MCF 10A (cell line): ENCODE measurements at regions of chr3 and their contacts with region 1.

Region 1: GRCh38 chr3:98602078-98602678 is 8.8 kb upstream of the CPOX start:
- DNase-seq: peak; percentile 70
- H3K4me3 Mint-ChIP-seq: no peak overlapping the region
- H3K27ac Mint-ChIP-seq: no peak overlapping the region
- H3K4me1 Mint-ChIP-seq: no peaks in the 10 kb centered on the region
- H3K27me3 Mint-ChIP-seq: no peaks in the 10 kb centered on the region
- CTCF ChIP-seq: peak; percentile 77

Region 2: DNA sequence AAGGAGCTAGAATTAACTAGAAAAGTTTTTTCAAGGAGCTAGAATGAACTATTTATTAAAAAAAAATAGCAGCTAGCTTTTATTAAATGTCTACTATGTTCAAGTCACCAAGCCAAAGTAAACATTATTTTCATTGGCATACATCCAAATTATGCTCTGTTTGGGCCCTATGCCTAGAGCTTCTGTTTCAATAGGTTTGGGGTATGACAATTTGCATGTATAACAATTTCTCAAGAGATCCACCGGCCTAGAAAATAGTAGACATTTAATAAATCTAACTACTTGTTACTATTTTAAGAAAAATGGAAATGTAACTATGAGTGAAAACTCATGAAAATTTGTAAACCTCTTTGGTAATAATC is 575.1 kb before region 1 on chr3:
- CTCF ChIA-PET with region 1: no interaction called
- POLR2A ChIA-PET with region 1: no interaction called
- intact Hi-C with region 1: no loop called
- DNase-seq: peak; percentile 56
- H3K4me3 Mint-ChIP-seq: no peak overlapping the region
- H3K27ac Mint-ChIP-seq: no peak overlapping the region
- H3K4me1 Mint-ChIP-seq: peaks cover 11% of the 10 kb centered on the region
- H3K27me3 Mint-ChIP-seq: no peaks in the 10 kb centered on the region
- CTCF ChIP-seq: no peak

Region 3: GRCh38 chr3:98588065-98588464 is 14.1 kb before region 1 on chr3:
- CTCF ChIA-PET with region 1: interaction called, 24 read pairs
- POLR2A ChIA-PET with region 1: interaction called, 8 read pairs
- intact Hi-C with region 1: no loop called
- DNase-seq: no peak
- H3K4me3 Mint-ChIP-seq: no peak overlapping the region
- H3K27ac Mint-ChIP-seq: no peak overlapping the region
- H3K4me1 Mint-ChIP-seq: peaks cover 33% of the 10 kb centered on the region
- H3K27me3 Mint-ChIP-seq: no peaks in the 10 kb centered on the region
- CTCF ChIP-seq: peak; percentile 30

Region 4: GRCh38 chr3:98670020-98670419 is 67.8 kb after region 1 on chr3:
- CTCF ChIA-PET with region 1: interaction called, 10 read pairs
- POLR2A ChIA-PET with region 1: no interaction called
- intact Hi-C with region 1: no loop called
- DNase-seq: no peak
- H3K4me3 Mint-ChIP-seq: no peak overlapping the region
- H3K27ac Mint-ChIP-seq: no peak overlapping the region
- H3K4me1 Mint-ChIP-seq: no peaks in the 10 kb centered on the region
- H3K27me3 Mint-ChIP-seq: no peaks in the 10 kb centered on the region
- CTCF ChIP-seq: no peak

Region 5: GRCh38 chr3:98784666-98785600 is 182.8 kb after region 1 on chr3:
- CTCF ChIA-PET with region 1: interaction called, 30 read pairs
- POLR2A ChIA-PET with region 1: no interaction called
- intact Hi-C with region 1: no loop called
- DNase-seq: peak; percentile 81
- H3K4me3 Mint-ChIP-seq: peak overlapping the region; percentile 1
- H3K27ac Mint-ChIP-seq: peak overlapping the region; percentile 38
- H3K4me1 Mint-ChIP-seq: peaks cover 42% of the 10 kb centered on the region
- H3K27me3 Mint-ChIP-seq: no peaks in the 10 kb centered on the region
- CTCF ChIP-seq: no peak

Region 6: GRCh38 chr3:98806541-98806941 is 204.4 kb after region 1 on chr3:
- CTCF ChIA-PET with region 1: interaction called, 407 read pairs
- POLR2A ChIA-PET with region 1: no interaction called
- intact Hi-C with region 1: no loop called
- DNase-seq: no peak
- H3K4me3 Mint-ChIP-seq: no peak overlapping the region
- H3K27ac Mint-ChIP-seq: peak overlapping the region; percentile 43
- H3K4me1 Mint-ChIP-seq: no peaks in the 10 kb centered on the region
- H3K27me3 Mint-ChIP-seq: no peaks in the 10 kb centered on the region
- CTCF ChIP-seq: no peak

Region 7: DNA sequence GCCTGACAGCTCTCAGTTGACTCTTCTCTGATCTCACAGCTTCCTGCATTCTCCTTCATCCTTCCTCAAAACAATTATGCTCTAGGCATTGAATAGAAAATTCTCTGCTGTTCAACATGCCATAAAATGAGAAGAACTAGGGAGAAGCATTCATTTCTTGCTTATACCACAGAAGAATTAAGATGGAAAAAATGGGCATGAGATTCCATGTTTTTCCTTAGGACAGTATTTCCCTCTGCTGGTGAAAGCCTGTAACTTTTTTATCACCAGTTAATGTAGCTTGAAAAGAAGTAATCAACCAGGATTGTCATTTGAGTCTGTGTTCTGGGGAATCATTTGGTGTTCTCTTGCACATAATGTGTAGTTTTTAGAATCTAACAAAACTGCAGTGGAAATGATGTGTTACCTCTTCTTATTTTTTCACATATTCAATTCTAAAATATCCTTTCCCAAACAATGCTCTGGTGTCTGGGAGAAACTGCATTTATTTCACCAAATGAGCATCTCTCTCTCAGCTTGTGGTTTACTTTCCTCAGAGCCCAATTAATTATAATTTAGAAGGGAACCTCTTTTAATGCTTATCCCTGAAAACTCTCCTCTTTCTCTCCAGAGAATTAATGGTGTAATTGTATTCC is 392.1 kb after region 1 on chr3:
- CTCF ChIA-PET with region 1: interaction called, 51 read pairs
- POLR2A ChIA-PET with region 1: no interaction called
- intact Hi-C with region 1: loop called (anchors 1 kb)
- DNase-seq: peak; percentile 55
- H3K4me3 Mint-ChIP-seq: no peak overlapping the region
- H3K27ac Mint-ChIP-seq: no peak overlapping the region
- H3K4me1 Mint-ChIP-seq: no peaks in the 10 kb centered on the region
- H3K27me3 Mint-ChIP-seq: no peaks in the 10 kb centered on the region
- CTCF ChIP-seq: peak; percentile 53